ENCODE measurements at regions of chr22 and their contacts with region 1.

Region 1: DNA sequence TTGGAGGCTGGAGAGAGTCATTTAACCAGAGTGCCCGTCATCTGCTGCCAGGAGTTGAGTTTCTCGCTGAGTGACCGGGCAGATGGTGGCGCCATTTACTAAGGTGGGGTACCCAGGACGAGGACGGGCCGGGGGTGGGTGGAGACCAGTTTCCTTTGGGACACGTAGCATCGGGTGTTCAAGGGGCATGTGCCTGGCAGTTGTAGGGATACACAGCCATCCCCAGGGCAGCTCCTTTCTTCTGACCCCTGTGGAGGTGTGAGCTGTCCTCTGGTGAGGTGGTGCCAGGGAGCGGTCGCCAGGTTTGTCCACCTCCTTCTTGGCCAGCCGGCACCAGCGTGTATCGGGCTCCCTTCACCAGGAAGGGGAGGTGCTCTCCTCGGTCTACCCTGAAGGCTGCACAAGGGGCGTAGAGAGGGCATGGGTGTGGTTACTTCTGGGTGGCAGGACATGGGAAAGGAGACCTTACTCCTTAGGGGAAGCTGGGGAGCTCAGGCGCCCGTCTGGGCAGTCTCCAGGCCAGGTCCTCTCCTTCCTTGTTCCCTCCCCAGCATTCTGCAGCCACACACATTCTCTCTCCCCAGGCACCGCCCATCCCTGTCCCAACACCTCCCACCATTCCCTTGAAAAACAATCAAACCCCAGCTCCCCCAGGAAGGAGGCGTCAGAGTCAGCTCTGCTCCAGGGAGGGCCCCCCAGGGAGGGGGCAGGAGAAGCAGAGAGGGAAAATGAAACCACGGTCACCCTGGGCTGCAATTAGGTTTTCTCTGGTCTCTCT is 10.3 kb upstream of the MB start:
- DNase-seq: peak; percentile 90
- ATAC-seq: peak; percentile 77
- H3K4me3 ChIP-seq: peak overlapping the region; percentile 50
- H3K27ac ChIP-seq: peak overlapping the region; percentile 82
- H3K4me1 ChIP-seq: peaks cover 9% of the 10 kb centered on the region
- H3K27me3 ChIP-seq: no peaks in the 10 kb centered on the region
- CTCF ChIP-seq: peak; percentile 81
- POLR2A ChIP-seq: no peak
- RAD21 ChIP-seq: peak; percentile 88

Region 2: DNA sequence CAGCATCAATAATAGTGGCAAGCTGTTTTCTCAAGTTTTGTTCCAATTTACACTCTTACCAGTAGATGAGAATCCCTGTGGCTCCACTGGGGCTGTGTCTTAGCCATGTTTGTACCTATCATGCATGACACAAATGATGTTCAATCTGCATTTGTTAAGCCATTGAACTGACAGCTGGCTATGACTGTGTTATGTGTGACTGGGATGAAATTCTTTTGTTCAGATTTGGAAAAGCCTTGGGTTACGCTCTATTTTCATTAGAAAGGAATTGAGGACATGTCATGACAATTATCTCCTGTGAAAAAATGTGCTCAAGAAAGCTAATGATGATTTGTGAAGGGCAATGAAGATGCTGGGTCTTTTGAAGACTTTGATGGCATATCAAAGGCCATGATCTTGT is 1505.4 kb before region 1 on chr22:
- CTCF ChIA-PET with region 1: no interaction called
- POLR2A ChIA-PET with region 1: no interaction called
- dilution Hi-C with region 1: no loop called
- in situ Hi-C with region 1: no loop called
- intact Hi-C with region 1: no loop called
- DNase-seq: no peak
- ATAC-seq: no peak
- H3K4me3 ChIP-seq: no peak overlapping the region
- H3K27ac ChIP-seq: no peak overlapping the region
- H3K4me1 ChIP-seq: no peaks in the 10 kb centered on the region
- H3K27me3 ChIP-seq: no peaks in the 10 kb centered on the region
- CTCF ChIP-seq: no peak
- POLR2A ChIP-seq: no peak
- RAD21 ChIP-seq: no peak

Region 3: GRCh38 chr22:35524966-35525686 is 102.3 kb before region 1 on chr22:
- CTCF ChIA-PET with region 1: no interaction called
- POLR2A ChIA-PET with region 1: no interaction called
- dilution Hi-C with region 1: no loop called
- in situ Hi-C with region 1: no loop called
- intact Hi-C with region 1: no loop called
- DNase-seq: no peak
- ATAC-seq: peak; percentile 21; the same call in 1 of the 2 replicates
- H3K4me3 ChIP-seq: no peak overlapping the region
- H3K27ac ChIP-seq: no peak overlapping the region
- H3K4me1 ChIP-seq: peaks cover 3% of the 10 kb centered on the region; the same call in 1 of the 2 replicates
- H3K27me3 ChIP-seq: peaks cover 19% of the 10 kb centered on the region
- CTCF ChIP-seq: no peak
- POLR2A ChIP-seq: no peak
- RAD21 ChIP-seq: no peak

Region 4: GRCh38 chr22:35539910-35540594 is 87.4 kb before region 1 on chr22:
- CTCF ChIA-PET with region 1: no interaction called
- POLR2A ChIA-PET with region 1: no interaction called
- dilution Hi-C with region 1: no loop called
- in situ Hi-C with region 1: no loop called
- intact Hi-C with region 1: no loop called
- DNase-seq: peak; percentile 22
- ATAC-seq: peak; percentile 93
- H3K4me3 ChIP-seq: peak overlapping the region; percentile 85
- H3K27ac ChIP-seq: peak overlapping the region; percentile 41; the same call in 1 of the 2 replicates
- H3K4me1 ChIP-seq: peaks cover 20% of the 10 kb centered on the region
- H3K27me3 ChIP-seq: no peaks in the 10 kb centered on the region
- CTCF ChIP-seq: no peak
- POLR2A ChIP-seq: no peak
- RAD21 ChIP-seq: no peak

Region 5: GRCh38 chr22:35648066-35649025 is 20.9 kb after region 1 on chr22 and contains the start of gene APOL6:
- CTCF ChIA-PET with region 1: interaction called, 6 read pairs
- POLR2A ChIA-PET with region 1: no interaction called
- dilution Hi-C with region 1: no loop called
- in situ Hi-C with region 1: no loop called
- intact Hi-C with region 1: loop called (anchors 1 kb)
- DNase-seq: peak; percentile 76
- ATAC-seq: peak; percentile 45
- H3K4me3 ChIP-seq: peak within 1 kb of the TSS; percentile 73
- H3K27ac ChIP-seq: peak within 1 kb of the TSS; percentile 95
- H3K4me1 ChIP-seq: peaks cover 10% of the 10 kb centered on the region
- H3K27me3 ChIP-seq: no peaks in the 10 kb centered on the region
- CTCF ChIP-seq: no peak
- POLR2A ChIP-seq: 0 out of 2 replicates have a peak, but pooled peaks have one; percentile 26
- RAD21 ChIP-seq: no peak
- total RNA-seq, gene APOL6: 7.2 TPM in 2 replicates

Region 6: GRCh38 chr22:35749808-35750207 is 122.4 kb after region 1 on chr22:
- CTCF ChIA-PET with region 1: no interaction called
- POLR2A ChIA-PET with region 1: no interaction called
- dilution Hi-C with region 1: no loop called
- in situ Hi-C with region 1: no loop called
- intact Hi-C with region 1: loop called (anchors 2 kb)
- DNase-seq: no peak
- ATAC-seq: no peak
- H3K4me3 ChIP-seq: no peak overlapping the region
- H3K27ac ChIP-seq: no peak overlapping the region
- H3K4me1 ChIP-seq: peaks cover 18% of the 10 kb centered on the region
- H3K27me3 ChIP-seq: no peaks in the 10 kb centered on the region
- CTCF ChIP-seq: no peak
- POLR2A ChIP-seq: no peak
- RAD21 ChIP-seq: no peak

Region 7: DNA sequence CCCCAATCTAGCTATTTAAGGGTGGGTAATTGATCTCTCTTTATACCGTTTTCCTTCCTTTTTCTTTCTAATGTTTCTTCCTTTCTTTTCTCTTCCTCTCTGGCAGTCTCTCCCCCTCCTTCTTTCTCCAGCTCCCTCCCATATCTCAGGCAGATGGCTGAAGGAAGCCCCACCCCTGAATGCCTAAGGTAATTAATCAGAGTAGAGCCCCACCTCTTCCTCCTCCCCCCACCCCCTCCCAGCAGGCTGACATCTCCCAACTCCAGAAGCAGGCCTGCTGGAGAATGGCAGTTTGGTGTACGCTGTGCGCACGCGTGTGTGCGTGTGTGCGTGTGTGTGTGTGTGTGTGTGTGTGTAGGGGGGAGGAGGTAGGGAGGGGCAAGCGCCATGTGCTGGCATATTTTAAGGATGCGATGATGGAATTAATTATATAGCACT is 212.9 kb after region 1 on chr22:
- CTCF ChIA-PET with region 1: interaction called, 5 read pairs
- POLR2A ChIA-PET with region 1: no interaction called
- dilution Hi-C with region 1: no loop called
- in situ Hi-C with region 1: loop called (anchors 10 kb)
- intact Hi-C with region 1: loop called (anchors 1 kb)
- DNase-seq: peak; percentile 98
- ATAC-seq: peak; percentile 87
- H3K4me3 ChIP-seq: peak overlapping the region; percentile 77
- H3K27ac ChIP-seq: peak overlapping the region; percentile 86
- H3K4me1 ChIP-seq: peaks cover 6% of the 10 kb centered on the region
- H3K27me3 ChIP-seq: no peaks in the 10 kb centered on the region
- CTCF ChIP-seq: no peak
- POLR2A ChIP-seq: peak; percentile 48; the same call in 1 of the 2 replicates
- RAD21 ChIP-seq: no peak

Region 8: DNA sequence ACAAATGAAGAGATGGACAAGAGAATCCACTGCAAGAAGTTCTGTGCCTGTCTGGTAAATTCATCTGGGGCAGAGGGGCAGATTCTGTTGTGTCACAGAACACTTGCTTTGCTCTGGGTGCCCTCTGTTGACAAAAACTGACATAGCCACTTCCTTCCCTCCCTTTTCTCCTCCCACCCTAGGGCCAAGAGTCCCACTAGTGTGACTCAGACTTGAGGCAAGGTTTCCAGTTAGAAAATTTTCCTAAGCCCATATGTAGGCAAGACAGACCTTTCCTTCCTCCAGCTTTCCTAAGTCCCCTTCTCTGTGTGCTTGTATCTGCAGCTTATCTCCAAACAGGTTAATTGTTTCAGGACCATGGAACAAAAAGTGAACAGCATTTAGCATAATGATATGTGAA is 294.3 kb after region 1 on chr22:
- CTCF ChIA-PET with region 1: interaction called, 4 read pairs
- POLR2A ChIA-PET with region 1: no interaction called
- dilution Hi-C with region 1: no loop called
- in situ Hi-C with region 1: loop called (anchors 5 kb)
- intact Hi-C with region 1: loop called (anchors 1 kb)
- DNase-seq: peak; percentile 90
- ATAC-seq: peak; percentile 94
- H3K4me3 ChIP-seq: no peak overlapping the region
- H3K27ac ChIP-seq: no peak overlapping the region
- H3K4me1 ChIP-seq: peaks cover 6% of the 10 kb centered on the region
- H3K27me3 ChIP-seq: no peaks in the 10 kb centered on the region
- CTCF ChIP-seq: peak; percentile 80
- POLR2A ChIP-seq: no peak
- RAD21 ChIP-seq: peak; percentile 93

Region 9: GRCh38 chr22:36028646-36029405 is 401.4 kb after region 1 on chr22 and contains the start of gene RBFOX2:
- CTCF ChIA-PET with region 1: no interaction called
- POLR2A ChIA-PET with region 1: no interaction called
- dilution Hi-C with region 1: no loop called
- in situ Hi-C with region 1: no loop called
- intact Hi-C with region 1: loop called (anchors 5 kb)
- DNase-seq: peak; percentile 95
- ATAC-seq: peak; percentile 93
- H3K4me3 ChIP-seq: peak within 1 kb of the TSS; percentile 98
- H3K27ac ChIP-seq: peak within 1 kb of the TSS; percentile 95
- H3K4me1 ChIP-seq: peaks cover 4% of the 10 kb centered on the region
- H3K27me3 ChIP-seq: no peaks in the 10 kb centered on the region
- CTCF ChIP-seq: no peak
- POLR2A ChIP-seq: peak; percentile 52; the same call in 1 of the 2 replicates
- RAD21 ChIP-seq: no peak
- total RNA-seq, gene RBFOX2: 178 and 227 TPM in 2 replicates